ENCODE measurements at regions of chr2 and their contacts with region 1.

Region 1: DNA sequence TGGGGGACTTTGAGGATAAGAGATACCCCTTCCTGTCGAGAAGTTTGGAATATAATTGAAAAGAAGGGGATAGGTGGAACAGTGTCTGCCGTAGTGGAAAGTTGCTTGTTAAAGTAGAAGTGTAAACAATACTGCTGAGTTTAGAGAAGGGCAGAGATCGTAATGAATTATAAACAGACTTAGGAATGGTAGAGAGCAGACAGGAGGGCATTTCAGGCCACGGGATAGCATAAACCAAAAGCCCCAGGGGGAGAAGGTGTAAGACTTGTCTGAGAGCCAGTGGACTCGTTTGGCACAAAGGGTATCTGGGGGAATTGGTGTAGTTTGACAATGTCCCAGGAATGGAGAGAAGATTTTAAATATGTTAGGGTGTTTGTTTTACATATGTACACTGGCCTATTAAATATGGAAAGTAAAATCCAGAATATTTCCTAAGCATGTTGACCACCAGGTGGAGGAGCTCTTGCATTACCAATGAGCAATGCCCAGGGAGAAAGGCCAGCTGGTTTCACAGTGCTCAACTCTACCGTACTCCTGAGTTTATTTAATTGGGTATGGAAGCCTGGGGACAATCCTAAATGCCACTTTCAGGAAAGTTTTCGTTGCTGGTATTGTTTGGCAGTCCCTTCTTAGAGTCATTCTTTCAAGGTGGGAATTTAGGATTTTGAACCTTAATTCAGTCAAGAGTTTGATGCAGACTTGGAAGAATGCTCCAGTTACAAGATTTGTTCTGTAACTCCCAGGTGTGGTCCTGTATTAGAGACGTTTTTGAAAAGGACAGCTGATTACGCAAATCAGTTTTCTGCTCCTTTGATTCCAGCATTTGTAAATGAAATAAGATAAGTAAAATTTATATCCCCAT is 7.5 kb downstream of the COPS8 start:
- DNase-seq: peak; percentile 86
- H3K4me3 Mint-ChIP-seq: peak overlapping the region; percentile 99
- H3K27ac Mint-ChIP-seq: peak overlapping the region; percentile 94
- H3K4me1 Mint-ChIP-seq: peaks cover 62% of the 10 kb centered on the region
- H3K27me3 Mint-ChIP-seq: no peaks in the 10 kb centered on the region
- CTCF ChIP-seq: peak; percentile 72

Region 2: GRCh38 chr2:236711440-236711839 is 381.7 kb before region 1 on chr2:
- CTCF ChIA-PET with region 1: no interaction called
- POLR2A ChIA-PET with region 1: no interaction called
- intact Hi-C with region 1: no loop called
- DNase-seq: peak; percentile 42
- H3K4me3 Mint-ChIP-seq: no peak overlapping the region
- H3K27ac Mint-ChIP-seq: no peak overlapping the region
- H3K4me1 Mint-ChIP-seq: peaks cover 26% of the 10 kb centered on the region
- H3K27me3 Mint-ChIP-seq: no peaks in the 10 kb centered on the region
- CTCF ChIP-seq: no peak

Region 3: DNA sequence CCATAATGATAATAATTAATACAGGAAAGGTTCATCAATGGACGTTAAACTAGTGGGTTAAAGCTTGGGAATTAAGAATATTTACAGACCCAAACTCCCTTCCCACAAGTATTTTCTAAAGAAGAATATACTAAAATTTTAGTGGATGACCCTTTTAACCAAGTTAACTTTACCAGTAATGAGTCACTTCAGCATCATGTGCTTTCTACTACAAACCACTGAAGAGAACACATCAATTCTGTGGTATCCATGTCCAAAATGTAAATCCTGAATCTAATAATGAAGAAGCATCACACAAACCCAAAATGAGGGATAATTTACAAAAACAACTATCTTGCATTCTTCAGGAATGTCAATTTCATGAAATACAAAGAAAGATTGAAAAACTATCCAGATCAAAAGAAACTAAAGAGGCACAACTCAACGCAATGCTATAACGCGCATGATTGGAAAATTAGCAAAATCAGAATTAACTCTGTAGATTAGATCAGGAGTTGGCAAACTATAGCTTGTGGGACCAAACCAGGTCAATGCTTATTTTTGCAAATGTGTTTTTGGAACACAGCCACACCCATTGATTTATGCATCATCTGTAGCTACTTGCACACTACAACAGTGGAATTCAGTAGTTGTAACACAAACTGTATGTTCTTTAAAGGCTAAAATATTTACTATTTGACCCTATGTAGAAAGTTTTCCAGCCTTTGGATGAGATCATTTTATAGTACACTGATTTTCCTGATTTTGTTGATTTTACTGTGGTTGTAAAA is 20.1 kb after region 1 on chr2:
- CTCF ChIA-PET with region 1: interaction called, 4 read pairs
- POLR2A ChIA-PET with region 1: interaction called, 21 read pairs
- intact Hi-C with region 1: no loop called
- DNase-seq: no peak
- H3K4me3 Mint-ChIP-seq: no peak overlapping the region
- H3K27ac Mint-ChIP-seq: no peak overlapping the region
- H3K4me1 Mint-ChIP-seq: peaks cover 12% of the 10 kb centered on the region
- H3K27me3 Mint-ChIP-seq: no peaks in the 10 kb centered on the region
- CTCF ChIP-seq: no peak

Region 4: GRCh38 chr2:237128026-237128703 is 35.0 kb after region 1 on chr2:
- CTCF ChIA-PET with region 1: interaction called, 8 read pairs
- POLR2A ChIA-PET with region 1: interaction called, 9 read pairs
- intact Hi-C with region 1: loop called (anchors 2 kb)
- DNase-seq: peak; percentile 98
- H3K4me3 Mint-ChIP-seq: no peak overlapping the region
- H3K27ac Mint-ChIP-seq: no peak overlapping the region
- H3K4me1 Mint-ChIP-seq: no peaks in the 10 kb centered on the region
- H3K27me3 Mint-ChIP-seq: no peaks in the 10 kb centered on the region
- CTCF ChIP-seq: no peak

Region 5: DNA sequence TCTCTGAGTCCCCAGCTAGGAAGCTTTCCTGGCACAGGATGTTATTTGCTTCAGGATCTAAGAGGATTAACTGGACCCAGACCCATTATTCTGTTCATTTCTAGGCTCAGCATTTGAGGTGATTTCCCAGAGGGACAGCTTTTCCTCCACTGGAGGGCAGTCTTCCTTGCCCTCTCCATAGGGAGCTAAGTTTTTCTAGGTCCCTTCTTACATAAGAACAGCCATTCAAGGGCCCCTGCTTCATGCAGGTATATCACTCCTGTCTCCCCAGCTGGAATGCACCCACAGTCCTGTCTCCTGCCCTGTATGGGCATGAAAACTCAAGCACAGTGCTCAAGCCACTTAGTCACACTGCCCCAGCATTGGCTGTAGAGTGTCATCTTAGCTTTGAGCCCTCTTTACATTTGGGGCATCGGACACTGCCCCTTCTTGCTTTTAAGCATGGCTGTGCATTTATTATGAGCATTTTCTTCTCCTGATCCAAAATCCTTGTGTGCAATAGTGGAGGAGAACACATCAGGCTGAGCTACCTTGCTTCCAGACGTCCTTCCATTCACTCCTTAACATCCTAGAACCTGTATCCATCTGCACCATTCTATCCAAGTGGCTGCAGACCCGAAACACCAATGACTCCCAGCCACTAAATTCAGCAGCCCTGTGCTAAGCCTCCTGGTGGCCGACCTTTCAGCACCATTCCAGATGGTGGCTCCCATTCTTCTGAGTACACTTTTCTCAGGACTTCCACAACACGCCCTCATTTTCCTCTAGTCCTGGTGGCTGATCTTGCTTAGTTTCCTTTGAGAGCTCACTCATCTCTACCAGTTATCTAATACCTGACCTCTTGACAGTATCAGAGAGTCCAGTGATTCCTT is 72.5 kb after region 1 on chr2:
- CTCF ChIA-PET with region 1: interaction called, 4 read pairs
- POLR2A ChIA-PET with region 1: interaction called, 4 read pairs
- intact Hi-C with region 1: loop called (anchors 1 kb)
- DNase-seq: peak; percentile 55
- H3K4me3 Mint-ChIP-seq: no peak overlapping the region
- H3K27ac Mint-ChIP-seq: peak overlapping the region; percentile 2
- H3K4me1 Mint-ChIP-seq: peaks cover 7% of the 10 kb centered on the region
- H3K27me3 Mint-ChIP-seq: no peaks in the 10 kb centered on the region
- CTCF ChIP-seq: peak; percentile 31

Region 6: GRCh38 chr2:237322564-237322963 is 229.4 kb after region 1 on chr2:
- CTCF ChIA-PET with region 1: interaction called, 3 read pairs
- POLR2A ChIA-PET with region 1: interaction called, 3 read pairs
- intact Hi-C with region 1: loop called (anchors 1 kb)
- DNase-seq: peak; percentile 66
- H3K4me3 Mint-ChIP-seq: no peak overlapping the region
- H3K27ac Mint-ChIP-seq: no peak overlapping the region
- H3K4me1 Mint-ChIP-seq: peaks cover 16% of the 10 kb centered on the region
- H3K27me3 Mint-ChIP-seq: no peaks in the 10 kb centered on the region
- CTCF ChIP-seq: peak; percentile 40

Region 7: GRCh38 chr2:237474931-237475703 is 382.0 kb after region 1 on chr2:
- CTCF ChIA-PET with region 1: interaction called, 5 read pairs
- POLR2A ChIA-PET with region 1: interaction called, 3 read pairs
- intact Hi-C with region 1: loop called (anchors 1 kb)
- DNase-seq: peak; percentile 65
- H3K4me3 Mint-ChIP-seq: peak overlapping the region; percentile 79
- H3K27ac Mint-ChIP-seq: peak overlapping the region; percentile 94
- H3K4me1 Mint-ChIP-seq: peaks cover 9% of the 10 kb centered on the region
- H3K27me3 Mint-ChIP-seq: no peaks in the 10 kb centered on the region
- CTCF ChIP-seq: peak; percentile 92